Right ventricle myocardium superior (tissue), 1 donor: ENCODE measurements at regions of chr6 and their contacts with region 1.

Region 1: GRCh38 chr6:138765896-138766655 is 7.5 kb upstream of the CCDC28A start:
- DNase-seq: no peak
- ATAC-seq: peak; percentile 48

Region 2: DNA sequence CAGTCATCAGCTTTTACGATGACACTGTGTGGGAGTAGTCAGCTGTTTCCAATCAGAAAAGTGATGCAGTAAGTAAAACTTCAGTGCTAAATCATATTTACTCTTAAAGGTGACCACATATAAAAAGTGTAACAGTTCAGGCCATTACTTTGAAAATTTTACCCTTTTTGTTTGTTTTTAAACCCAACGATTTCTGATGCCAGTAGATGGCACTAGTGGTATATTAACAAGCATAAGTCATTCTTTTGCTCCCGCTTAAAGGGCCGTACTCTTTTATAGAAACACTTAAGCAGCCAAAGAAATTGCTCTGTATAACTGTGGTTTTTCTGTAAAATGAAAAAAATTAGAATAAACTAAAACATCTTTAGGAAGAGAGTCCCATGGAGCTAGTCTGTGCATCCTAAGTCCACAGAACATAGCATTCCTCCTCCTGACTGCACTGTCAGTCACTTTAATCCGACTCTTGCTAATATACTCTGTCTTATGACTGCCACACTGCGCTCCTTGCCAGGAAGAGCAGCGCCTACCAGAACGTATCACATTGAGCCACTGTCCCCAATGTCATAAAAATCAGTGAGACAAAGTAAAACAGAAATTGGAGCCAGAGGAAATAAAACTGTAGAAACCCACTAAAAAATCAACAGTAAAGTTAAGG is 337.0 kb before region 1 on chr6:
- intact Hi-C with region 1: loop called (anchors 10 kb)
- DNase-seq: no peak
- ATAC-seq: peak; percentile 56

Region 3: DNA sequence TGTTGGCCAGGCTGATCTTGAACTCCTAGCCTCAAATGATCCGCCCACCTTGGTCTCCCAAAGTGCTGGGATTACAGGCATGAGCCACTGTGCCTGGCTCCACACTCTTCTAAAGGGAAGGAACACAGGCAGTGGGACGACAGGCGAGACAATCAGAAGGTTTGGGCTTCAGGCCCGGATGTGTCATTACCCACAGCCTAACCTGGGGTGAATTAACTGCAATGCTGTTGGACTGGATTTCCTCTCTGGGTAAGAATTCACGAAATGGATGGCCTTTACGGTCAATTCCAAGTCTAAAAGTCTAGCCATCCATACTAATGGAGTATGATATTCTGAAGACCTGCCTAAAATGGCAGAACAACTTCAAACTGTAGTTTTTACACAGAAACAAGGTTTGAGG is 76.2 kb before region 1 on chr6:
- intact Hi-C with region 1: loop called (anchors 5 kb)
- DNase-seq: no peak
- ATAC-seq: no peak